Pancreas (tissue), 10 donors: ENCODE measurements at regions of chr9 and their contacts with region 1.

Region 1: DNA sequence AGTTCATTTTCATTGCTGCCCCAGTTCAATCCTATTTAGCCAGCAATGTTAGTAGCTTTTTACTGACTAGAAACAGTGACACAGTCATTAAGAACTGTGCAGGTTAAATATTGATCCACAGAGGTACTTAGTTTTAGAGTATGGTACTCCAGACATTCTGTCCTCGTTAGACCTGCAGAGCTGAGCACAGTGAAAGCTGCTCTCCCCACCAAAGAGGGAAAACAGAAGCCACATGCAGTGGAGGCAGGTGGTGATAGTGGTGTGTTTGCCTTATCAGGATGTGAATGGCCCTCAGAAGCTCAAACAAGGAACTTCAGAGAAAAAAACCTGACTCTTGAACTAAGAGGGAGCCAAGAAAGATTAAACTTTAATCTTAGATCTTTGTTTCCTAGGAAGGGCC is 75.5 kb downstream of the UNC13B start:
- DNase-seq: peak in 2 of 6 donors; percentile 36 to 39
- ATAC-seq: peak; percentile 70 to 90 (median 86)
- H3K4me3 ChIP-seq: no peak overlapping the region
- H3K27ac ChIP-seq: peak overlapping the region in 3 of 4 donors; percentile 33 to 56 (median 40)
- H3K4me1 ChIP-seq: peaks cover 10 to 31% (median 23%) of the 10 kb centered on the region in 3 donors
- H3K27me3 ChIP-seq: no peaks in the 10 kb centered on the region
- CTCF ChIP-seq: no peak

Region 2: DNA sequence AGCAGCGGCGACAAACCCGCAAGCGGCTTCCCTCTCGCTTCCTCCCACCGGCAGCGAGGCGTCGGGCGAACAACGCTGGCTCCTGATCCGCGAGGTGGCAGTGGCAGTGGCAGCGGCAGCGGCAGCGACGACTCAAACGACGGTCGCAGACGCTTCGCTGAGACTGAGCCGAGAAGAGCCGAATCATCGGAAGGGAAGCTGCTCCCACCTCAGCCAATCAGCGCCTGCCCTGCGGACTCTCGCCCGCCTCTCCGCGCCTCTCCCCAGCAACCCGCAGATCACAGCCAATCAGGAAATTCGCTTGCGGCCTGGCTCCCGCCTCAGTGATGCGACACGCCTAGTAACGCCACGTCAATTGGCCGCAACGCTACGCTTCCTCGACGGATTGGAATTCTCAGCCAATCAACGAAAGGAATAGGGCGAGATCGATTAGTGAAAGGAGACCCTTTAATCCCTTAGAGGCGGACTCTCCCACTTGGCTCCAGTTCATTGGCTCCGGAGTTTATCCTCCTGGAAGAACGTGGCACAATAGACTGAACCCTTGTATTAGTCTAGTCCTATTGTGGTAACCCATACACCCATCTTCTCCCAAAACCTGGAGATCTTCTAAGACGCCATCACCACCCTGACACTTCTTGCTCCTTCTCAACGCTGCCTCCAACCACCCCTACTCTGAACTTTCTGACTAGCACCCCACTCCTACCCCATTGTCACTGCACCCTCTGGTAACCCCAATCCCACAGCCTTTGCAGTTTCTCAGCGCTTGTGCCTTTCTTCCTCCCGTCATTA is 164.7 kb before region 1 on chr9 and contains the start of gene VCP:
- intact Hi-C with region 1: no loop called
- DNase-seq: peak; percentile 93 to 99 (median 98)
- ATAC-seq: peak; percentile 91 to 96 (median 92)
- H3K4me3 ChIP-seq: peak within 1 kb of the TSS; percentile 87 to 98 (median 92)
- H3K27ac ChIP-seq: peak within 1 kb of the TSS; percentile 97 to 99 (median 99)
- H3K4me1 ChIP-seq: peaks cover 18 to 24% (median 19%) of the 10 kb centered on the region in 3 donors
- H3K27me3 ChIP-seq: no peaks in the 10 kb centered on the region
- CTCF ChIP-seq: no peak
- total RNA-seq, gene VCP: 44.5 to 104 (median 66.7) TPM

Region 3: DNA sequence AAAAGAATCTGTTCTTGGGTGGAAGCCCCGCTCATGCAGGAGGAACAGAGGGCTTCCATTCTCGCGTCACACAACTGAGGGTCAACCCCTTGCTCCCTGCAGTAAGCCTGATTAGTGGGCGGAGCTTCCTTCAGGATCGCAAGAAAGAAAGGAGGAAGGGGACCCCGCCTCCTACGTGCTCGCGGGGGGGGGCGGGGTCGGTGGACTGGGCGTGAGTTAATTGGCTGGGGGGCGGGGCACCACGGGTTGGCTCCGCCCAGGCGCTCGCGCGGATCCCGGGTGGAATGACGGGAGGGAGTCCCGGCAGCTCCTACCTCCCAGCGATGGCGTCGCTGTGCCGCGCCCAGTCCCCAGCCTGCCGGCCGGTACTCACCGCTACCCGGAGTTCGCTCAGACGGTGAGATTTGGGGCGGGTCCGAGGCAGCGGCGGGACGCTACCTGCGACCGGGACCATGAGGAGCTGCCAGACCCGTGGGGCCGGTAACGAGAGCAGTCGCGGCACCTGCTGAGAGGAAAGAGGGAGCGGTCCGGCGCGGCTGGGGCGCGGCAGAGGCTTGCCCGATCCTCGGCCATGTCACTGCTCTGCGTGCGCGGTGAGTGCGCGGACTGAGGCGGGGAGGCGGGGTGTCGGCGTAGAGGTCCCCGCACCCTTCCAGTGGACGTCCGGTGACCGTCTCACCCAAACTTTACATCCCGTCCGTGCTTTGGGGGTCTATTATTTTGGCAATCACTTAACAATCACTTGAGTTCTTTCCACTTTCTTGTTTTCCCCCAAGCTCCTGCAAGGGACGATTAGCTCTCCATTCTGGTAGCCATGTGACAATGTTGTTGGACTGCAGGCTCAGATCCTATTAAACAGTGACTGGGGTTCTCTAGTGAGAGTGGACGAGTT is 75.4 kb before region 1 on chr9 and contains the start of gene UNC13B:
- intact Hi-C with region 1: loop called in 1 of 3 experiments (anchors 10 kb)
- DNase-seq: peak; percentile 94 to 99 (median 98)
- ATAC-seq: peak; percentile 96 to 99 (median 98)
- H3K4me3 ChIP-seq: peak within 1 kb of the TSS; percentile 61 to 76 (median 69)
- H3K27ac ChIP-seq: peak within 1 kb of the TSS; percentile 90 to 95 (median 93)
- H3K4me1 ChIP-seq: peaks cover 0 to 11% (median 10%) of the 10 kb centered on the region in 3 donors
- H3K27me3 ChIP-seq: no peaks in the 10 kb centered on the region
- CTCF ChIP-seq: peak in 1 of 4 donors; percentile 7
- total RNA-seq, gene UNC13B: 23.7 to 33.8 (median 27.1) TPM

Region 4: DNA sequence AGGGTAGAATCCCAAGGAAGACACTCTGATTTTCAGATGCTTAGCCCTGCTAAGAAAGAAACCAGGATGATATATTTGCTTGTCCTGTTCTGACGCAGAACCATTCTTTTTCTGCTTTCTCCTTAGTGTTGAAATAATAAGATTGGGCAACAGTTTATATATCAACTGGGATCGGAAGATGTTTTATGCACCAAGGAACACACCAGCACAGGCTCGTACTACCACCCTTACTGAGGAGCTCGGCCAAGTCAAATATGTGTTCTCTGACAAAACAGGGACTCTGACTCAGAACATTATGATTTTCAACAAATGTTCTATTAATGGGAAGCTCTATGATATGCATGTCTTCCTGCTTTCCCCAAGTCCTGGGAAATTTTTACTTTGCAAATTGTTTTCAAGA is 233.6 kb after region 1 on chr9:
- intact Hi-C with region 1: no loop called
- DNase-seq: peak in 1 of 6 donors; percentile 36
- ATAC-seq: peak in 3 of 4 donors; percentile 77 to 86 (median 81)
- H3K4me3 ChIP-seq: no peak overlapping the region
- H3K27ac ChIP-seq: no peak overlapping the region
- H3K4me1 ChIP-seq: peaks cover 0 to 6% (median 0%) of the 10 kb centered on the region in 3 donors
- H3K27me3 ChIP-seq: no peaks in the 10 kb centered on the region
- CTCF ChIP-seq: no peak